Right cardiac atrium (tissue), 5 donors: ENCODE measurements at regions of chr4 and their contacts with region 1.

Region 1: DNA sequence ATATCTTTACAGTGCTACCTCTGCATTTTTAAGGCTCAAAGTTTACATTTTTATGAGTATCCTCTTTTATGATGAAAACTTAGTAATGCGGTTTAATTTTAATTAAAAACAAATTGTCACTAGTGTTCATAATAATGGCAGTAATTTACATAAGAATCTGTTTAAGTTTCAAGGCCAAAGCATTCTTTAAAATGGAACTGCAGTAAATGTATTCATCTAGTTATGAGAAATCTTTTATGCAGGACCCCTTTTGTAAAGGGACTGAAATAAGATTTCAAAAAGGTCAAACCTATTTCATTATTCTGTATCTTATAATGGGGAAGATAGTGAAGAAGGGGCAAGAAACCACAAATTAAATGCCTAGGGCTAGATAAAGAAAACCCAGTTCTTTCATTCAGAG is 37.1 kb downstream of the CHIC2 start:
- DNase-seq: no peak
- ATAC-seq: no peak
- H3K4me3 ChIP-seq: no peak overlapping the region
- H3K27ac ChIP-seq: no peak overlapping the region
- H3K4me1 ChIP-seq: peaks cover 4% of the 10 kb centered on the region
- H3K27me3 ChIP-seq: no peaks in the 10 kb centered on the region

Region 2: GRCh38 chr4:54050214-54050904 is 23.0 kb after region 1 on chr4:
- intact Hi-C with region 1: loop called in 1 of 4 experiments (anchors 2 kb)
- DNase-seq: no peak
- ATAC-seq: no peak
- H3K4me3 ChIP-seq: no peak overlapping the region
- H3K27ac ChIP-seq: no peak overlapping the region
- H3K4me1 ChIP-seq: peaks cover 1% of the 10 kb centered on the region
- H3K27me3 ChIP-seq: no peaks in the 10 kb centered on the region